Ovary (tissue), 10 donors: ENCODE measurements at regions of chr20 and their contacts with region 1.

Region 1: DNA sequence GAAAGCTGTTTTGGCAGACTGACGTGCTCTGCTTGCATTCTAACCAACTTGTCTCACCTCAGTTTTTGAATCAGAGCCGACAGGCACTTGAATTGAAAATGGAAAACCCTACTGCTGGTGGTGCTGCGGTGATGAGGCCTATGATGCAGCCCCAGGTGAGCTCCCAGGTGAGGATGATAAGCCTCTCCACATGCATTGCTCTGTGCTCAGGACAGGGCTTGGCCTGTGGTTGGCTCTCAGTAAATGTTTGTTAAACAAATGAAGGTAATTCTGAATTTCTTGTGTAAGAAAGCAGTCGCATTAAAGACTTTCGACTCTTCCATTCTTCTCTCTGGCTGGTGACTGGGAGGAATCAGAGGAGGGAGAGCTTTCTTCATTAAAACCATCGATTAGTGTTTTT is 136.3 kb downstream of the SULF2 start:
- DNase-seq: no peak
- H3K4me3 ChIP-seq: no peak overlapping the region
- H3K27ac ChIP-seq: peak overlapping the region in 1 of 2 donors; percentile 2
- H3K4me1 ChIP-seq: no peaks in the 10 kb centered on the region
- H3K27me3 ChIP-seq: no peaks in the 10 kb centered on the region
- CTCF ChIP-seq: no peak
- EP300 ChIP-seq: no peak
- POLR2A ChIP-seq: no peak

Region 2: DNA sequence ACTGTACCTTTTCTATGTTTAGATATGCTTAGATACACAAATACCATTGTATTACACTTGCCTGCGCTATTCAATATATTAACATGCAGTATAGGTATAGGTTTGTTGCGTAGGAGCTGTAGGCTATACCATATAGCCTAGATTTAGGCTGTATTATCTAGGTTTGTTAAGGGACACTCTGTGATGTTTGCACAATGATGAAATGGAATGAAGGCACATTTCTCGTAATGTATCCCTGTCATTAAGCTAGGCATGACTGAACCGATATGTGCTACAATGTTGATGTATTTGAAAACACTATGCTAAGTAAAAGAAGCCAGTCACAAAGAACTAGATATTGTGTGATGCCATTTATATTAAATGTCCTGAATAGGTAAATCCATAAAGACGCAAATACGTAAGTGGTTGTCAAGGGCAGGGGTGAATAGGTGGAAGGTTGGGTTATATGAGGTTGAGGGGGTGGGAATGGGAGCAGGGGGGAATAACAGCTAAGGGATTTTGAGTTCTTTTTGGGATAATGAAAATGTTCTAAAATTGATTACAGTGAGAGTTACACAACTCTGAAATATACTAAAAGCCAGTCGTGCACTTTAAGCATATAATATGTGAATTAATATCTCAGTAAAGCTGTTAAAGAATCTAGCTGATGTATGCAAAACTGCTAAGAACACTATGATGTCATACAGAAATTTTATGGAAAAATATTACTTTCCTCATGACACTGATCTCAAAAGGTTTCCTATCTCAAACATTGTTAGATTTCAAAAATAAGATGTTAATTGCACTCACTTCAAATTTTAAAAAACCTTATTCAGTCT is 49.8 kb before region 1 on chr20:
- intact Hi-C with region 1: loop called in 1 of 4 experiments (anchors 5 kb)
- DNase-seq: no peak
- H3K4me3 ChIP-seq: no peak overlapping the region
- H3K27ac ChIP-seq: no peak overlapping the region
- H3K4me1 ChIP-seq: peaks cover 1% of the 10 kb centered on the region
- H3K27me3 ChIP-seq: no peaks in the 10 kb centered on the region
- CTCF ChIP-seq: no peak
- EP300 ChIP-seq: no peak
- POLR2A ChIP-seq: no peak

Region 3: GRCh38 chr20:47989721-47990421 is 340.9 kb after region 1 on chr20:
- intact Hi-C with region 1: no loop called
- DNase-seq: no peak
- H3K4me3 ChIP-seq: no peak overlapping the region
- H3K27ac ChIP-seq: no peak overlapping the region
- H3K4me1 ChIP-seq: no peaks in the 10 kb centered on the region
- H3K27me3 ChIP-seq: no peaks in the 10 kb centered on the region
- CTCF ChIP-seq: no peak
- EP300 ChIP-seq: no peak
- POLR2A ChIP-seq: no peak

Region 4: GRCh38 chr20:49256261-49256660 is 1607.3 kb after region 1 on chr20:
- intact Hi-C with region 1: loop called in 1 of 4 experiments (anchors 5 kb)
- DNase-seq: no peak
- H3K4me3 ChIP-seq: no peak overlapping the region
- H3K27ac ChIP-seq: no peak overlapping the region
- H3K4me1 ChIP-seq: no peaks in the 10 kb centered on the region
- H3K27me3 ChIP-seq: no peaks in the 10 kb centered on the region
- CTCF ChIP-seq: no peak
- EP300 ChIP-seq: no peak
- POLR2A ChIP-seq: no peak